ENCODE measurements at regions of chr16 and their contacts with region 1.

Region 1: GRCh38 chr16:12147681-12148080 is 171.1 kb downstream of the SNX29 start:
- DNase-seq: peak; percentile 93
- H3K4me3 ChIP-seq: peak overlapping the region; percentile 60
- H3K27ac ChIP-seq: peak overlapping the region; percentile 97
- H3K4me1 ChIP-seq: peaks cover 92% of the 10 kb centered on the region
- CTCF ChIP-seq: 0 out of 2 replicates have a peak, but pooled peaks have one; percentile 29

Region 2: GRCh38 chr16:11510178-11510973 is 637.3 kb before region 1 on chr16:
- CTCF ChIA-PET with region 1: no interaction called
- POLR2A ChIA-PET with region 1: no interaction called
- intact Hi-C with region 1: no loop called
- DNase-seq: no peak
- H3K4me3 ChIP-seq: no peak overlapping the region
- H3K27ac ChIP-seq: no peak overlapping the region
- H3K4me1 ChIP-seq: peaks cover 7% of the 10 kb centered on the region
- CTCF ChIP-seq: no peak

Region 3: GRCh38 chr16:12132290-12132689 is 15.4 kb before region 1 on chr16:
- CTCF ChIA-PET with region 1: no interaction called
- POLR2A ChIA-PET with region 1: no interaction called
- intact Hi-C with region 1: no loop called
- DNase-seq: no peak
- H3K4me3 ChIP-seq: no peak overlapping the region
- H3K27ac ChIP-seq: no peak overlapping the region
- H3K4me1 ChIP-seq: no peaks in the 10 kb centered on the region
- CTCF ChIP-seq: no peak

Region 4: DNA sequence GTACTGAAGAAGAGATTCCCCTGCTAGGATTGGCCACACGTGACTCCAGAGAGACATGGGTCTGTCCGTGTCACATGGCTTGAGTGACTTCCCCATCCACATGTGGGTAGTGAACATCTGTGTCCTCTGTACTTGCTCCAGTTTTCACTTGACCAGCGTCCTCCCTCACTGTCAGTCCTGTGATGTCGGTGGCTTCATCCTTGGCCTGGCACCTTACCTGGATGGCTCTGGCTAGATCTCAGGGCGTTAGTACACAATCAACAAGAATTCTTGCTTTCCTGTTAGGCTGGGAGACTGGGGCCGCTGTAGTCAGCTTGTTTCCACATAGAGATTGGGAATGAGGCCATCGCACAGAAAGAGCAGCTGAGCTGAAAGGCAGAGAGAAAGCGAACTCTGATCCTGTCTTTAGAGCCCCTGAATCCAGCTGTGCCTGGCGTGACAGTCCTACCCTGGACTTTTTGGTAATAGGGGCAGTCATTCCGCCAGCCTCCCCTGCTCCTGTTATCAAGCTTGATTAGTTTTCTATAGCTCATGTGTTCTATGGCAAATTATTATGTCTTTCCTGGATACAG is 56.2 kb after region 1 on chr16:
- CTCF ChIA-PET with region 1: no interaction called
- POLR2A ChIA-PET with region 1: no interaction called
- intact Hi-C with region 1: no loop called
- DNase-seq: no peak
- H3K4me3 ChIP-seq: no peak overlapping the region
- H3K27ac ChIP-seq: no peak overlapping the region
- H3K4me1 ChIP-seq: no peaks in the 10 kb centered on the region
- CTCF ChIP-seq: no peak

Region 5: GRCh38 chr16:12228602-12229499 is 81.2 kb after region 1 on chr16:
- CTCF ChIA-PET with region 1: interaction called, 4 read pairs
- POLR2A ChIA-PET with region 1: interaction called, 4 read pairs
- intact Hi-C with region 1: loop called (anchors 5 kb)
- DNase-seq: peak; percentile 89
- H3K4me3 ChIP-seq: no peak overlapping the region
- H3K27ac ChIP-seq: peak overlapping the region; percentile 66
- H3K4me1 ChIP-seq: peaks cover 71% of the 10 kb centered on the region
- CTCF ChIP-seq: peak; percentile 96

Region 6: GRCh38 chr16:12303653-12304052 is 156.0 kb after region 1 on chr16:
- CTCF ChIA-PET with region 1: no interaction called
- POLR2A ChIA-PET with region 1: no interaction called
- intact Hi-C with region 1: no loop called
- DNase-seq: no peak
- H3K4me3 ChIP-seq: no peak overlapping the region
- H3K27ac ChIP-seq: no peak overlapping the region
- H3K4me1 ChIP-seq: peaks cover 35% of the 10 kb centered on the region
- CTCF ChIP-seq: no peak